Activated CD4-positive, alpha-beta memory T cell treated with anti-CD3 and anti-CD28 coated beads, Interleukin-2, amount 10 ng/mL, durations not matched to agents 7 days and 5 days (primary cell): ENCODE measurements at regions of chr9 and their contacts with region 1.

Region 1: DNA sequence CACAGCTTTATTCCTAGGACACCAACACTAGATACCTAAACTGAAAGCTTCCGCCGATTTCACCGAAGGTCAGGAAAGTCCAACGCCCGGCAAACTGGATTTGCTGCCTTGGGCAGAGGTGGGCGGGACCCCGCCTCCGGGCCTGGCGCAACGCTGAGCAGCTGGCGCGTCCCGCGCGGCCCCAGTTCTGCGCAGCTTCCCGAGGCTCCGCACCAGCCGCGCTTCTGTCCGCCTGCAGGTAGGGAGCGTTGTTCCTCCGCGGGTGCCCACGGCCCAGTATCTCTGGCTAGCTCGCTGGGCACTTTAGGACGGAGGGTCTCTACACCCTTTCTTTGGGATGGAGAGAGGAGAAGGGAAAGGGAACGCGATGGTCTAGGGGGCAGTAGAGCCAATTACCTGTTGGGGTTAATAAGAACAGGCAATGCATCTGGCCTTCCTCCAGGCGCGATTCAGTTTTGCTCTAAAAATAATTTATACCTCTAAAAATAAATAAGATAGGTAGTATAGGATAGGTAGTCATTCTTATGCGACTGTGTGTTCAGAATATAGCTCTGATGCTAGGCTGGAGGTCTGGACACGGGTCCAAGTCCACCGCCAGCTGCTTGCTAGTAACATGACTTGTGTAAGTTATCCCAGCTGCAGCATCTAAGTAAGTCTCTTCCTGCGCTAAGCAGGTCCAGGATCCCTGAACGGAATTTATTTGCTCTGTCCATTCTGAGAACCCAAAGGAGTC is at the start of gene CD274:
- DNase-seq: peak; percentile 86
- H3K4me3 Mint-ChIP-seq: peak within 1 kb of the TSS; percentile 95
- H3K27ac Mint-ChIP-seq: peak within 1 kb of the TSS; percentile 84
- H3K4me1 Mint-ChIP-seq: peaks cover 75% of the 10 kb centered on the region
- H3K27me3 Mint-ChIP-seq: no peaks in the 10 kb centered on the region
- total RNA-seq, gene CD274: 12.4 to 12.6 TPM

Region 2: DNA sequence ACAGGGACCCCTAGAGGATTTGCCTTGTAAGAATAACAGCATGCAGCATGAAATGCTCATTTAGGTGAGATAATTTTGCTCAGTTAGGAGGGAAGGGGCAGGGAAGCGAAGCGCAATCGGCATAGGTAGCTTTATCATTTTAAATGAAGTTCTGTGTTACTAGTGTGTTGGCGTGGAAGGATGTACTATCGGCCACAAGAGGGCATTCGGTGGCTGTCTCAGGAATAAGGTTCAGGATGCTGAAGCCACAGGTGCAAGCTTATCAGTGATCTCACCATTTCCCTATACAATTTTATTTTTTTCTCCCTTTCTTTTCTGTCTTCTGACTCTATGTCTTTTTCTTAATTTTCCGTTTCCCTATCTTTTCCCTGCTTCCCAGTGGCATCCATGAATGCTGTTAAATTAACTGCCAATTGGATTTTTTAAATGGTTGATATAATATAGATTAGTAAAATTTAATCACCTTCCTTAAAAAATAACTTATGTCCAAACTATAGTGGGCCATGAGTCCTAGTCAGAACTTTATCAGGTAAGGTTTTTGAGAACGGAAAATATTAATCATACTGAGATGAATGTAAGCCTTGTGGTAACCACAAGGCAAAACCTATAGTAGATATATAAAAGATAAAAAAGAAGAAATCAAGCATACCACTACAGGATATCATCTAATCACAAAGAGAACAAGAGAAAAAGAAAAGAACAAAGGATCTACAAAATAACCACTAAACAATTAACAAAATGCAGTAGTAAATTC is 263.9 kb before region 1 on chr9:
- CTCF ChIA-PET with region 1: interaction called, 11 read pairs
- POLR2A ChIA-PET with region 1: interaction called, 4 read pairs
- DNase-seq: peak; percentile 70
- H3K4me3 Mint-ChIP-seq: no peak overlapping the region
- H3K27ac Mint-ChIP-seq: no peak overlapping the region
- H3K4me1 Mint-ChIP-seq: peaks cover 19% of the 10 kb centered on the region
- H3K27me3 Mint-ChIP-seq: no peaks in the 10 kb centered on the region

Region 3: GRCh38 chr9:5493679-5494511 is 43.4 kb after region 1 on chr9:
- CTCF ChIA-PET with region 1: interaction called, 12 read pairs
- POLR2A ChIA-PET with region 1: interaction called, 6 read pairs
- DNase-seq: peak; percentile 38
- H3K4me3 Mint-ChIP-seq: no peak overlapping the region
- H3K27ac Mint-ChIP-seq: peak overlapping the region; percentile 64
- H3K4me1 Mint-ChIP-seq: peaks cover 20% of the 10 kb centered on the region
- H3K27me3 Mint-ChIP-seq: no peaks in the 10 kb centered on the region

Region 4: DNA sequence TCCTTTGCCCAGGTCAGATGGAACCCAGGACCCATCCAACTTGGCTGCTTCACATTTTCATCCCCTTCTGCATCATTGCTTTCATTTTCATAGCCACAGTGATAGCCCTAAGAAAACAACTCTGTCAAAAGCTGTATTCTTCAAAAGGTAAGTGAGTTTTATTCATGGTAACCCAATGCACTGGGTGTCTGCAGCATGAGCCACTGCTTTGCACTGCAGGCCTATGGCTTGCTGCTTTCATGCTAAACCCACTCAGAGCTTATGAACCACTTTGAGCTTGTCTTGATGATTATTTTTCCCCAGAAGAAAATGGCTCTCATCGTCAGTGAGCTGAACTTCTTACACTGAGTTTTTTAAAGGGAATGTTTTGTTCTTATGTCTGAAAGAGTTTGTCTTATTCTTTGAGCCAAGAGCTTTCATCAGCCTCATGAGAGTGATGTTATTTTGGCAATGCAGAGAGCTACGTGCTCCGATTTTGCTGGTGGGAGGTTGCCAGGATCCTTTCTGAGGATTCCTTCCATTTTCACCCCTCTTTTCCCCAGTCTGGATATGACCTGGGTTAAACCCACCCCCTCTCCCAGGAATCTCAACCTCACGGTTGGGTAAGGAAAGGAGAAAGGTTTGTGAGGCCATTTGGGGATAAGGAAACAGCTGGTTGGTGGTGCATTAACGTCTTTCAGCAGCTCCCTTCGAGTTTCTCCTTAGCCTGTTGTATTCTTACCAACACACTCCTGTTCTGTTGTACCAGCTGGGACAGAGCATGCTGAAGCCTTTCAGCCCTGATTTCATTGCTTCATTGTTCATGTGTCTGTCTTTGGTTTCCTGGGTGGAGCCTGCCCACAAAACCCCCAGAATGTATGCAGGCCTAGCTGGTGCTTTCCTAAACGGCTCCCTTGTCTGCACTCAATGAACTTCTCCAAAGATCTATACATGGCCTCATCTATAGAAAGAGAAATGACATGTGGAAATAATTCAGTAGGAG is 107.4 kb after region 1 on chr9:
- CTCF ChIA-PET with region 1: interaction called, 11 read pairs
- POLR2A ChIA-PET with region 1: interaction called, 24 read pairs
- DNase-seq: peak; percentile 77
- H3K4me3 Mint-ChIP-seq: peak overlapping the region; percentile 12
- H3K27ac Mint-ChIP-seq: peak overlapping the region; percentile 78
- H3K4me1 Mint-ChIP-seq: peaks cover 41% of the 10 kb centered on the region
- H3K27me3 Mint-ChIP-seq: no peaks in the 10 kb centered on the region

Region 5: GRCh38 chr9:5628530-5629311 is 178.2 kb after region 1 on chr9 and contains the start of gene RIC1:
- CTCF ChIA-PET with region 1: interaction called, 9 read pairs
- POLR2A ChIA-PET with region 1: interaction called, 21 read pairs
- DNase-seq: peak; percentile 93
- H3K4me3 Mint-ChIP-seq: peak within 1 kb of the TSS; percentile 99
- H3K27ac Mint-ChIP-seq: peak within 1 kb of the TSS; percentile 100
- H3K4me1 Mint-ChIP-seq: peaks cover 57% of the 10 kb centered on the region
- H3K27me3 Mint-ChIP-seq: no peaks in the 10 kb centered on the region
- total RNA-seq, gene RIC1: 20.7 to 21.5 TPM